ENCODE measurements at regions of chr1 and their contacts with region 1.

Region 1: DNA sequence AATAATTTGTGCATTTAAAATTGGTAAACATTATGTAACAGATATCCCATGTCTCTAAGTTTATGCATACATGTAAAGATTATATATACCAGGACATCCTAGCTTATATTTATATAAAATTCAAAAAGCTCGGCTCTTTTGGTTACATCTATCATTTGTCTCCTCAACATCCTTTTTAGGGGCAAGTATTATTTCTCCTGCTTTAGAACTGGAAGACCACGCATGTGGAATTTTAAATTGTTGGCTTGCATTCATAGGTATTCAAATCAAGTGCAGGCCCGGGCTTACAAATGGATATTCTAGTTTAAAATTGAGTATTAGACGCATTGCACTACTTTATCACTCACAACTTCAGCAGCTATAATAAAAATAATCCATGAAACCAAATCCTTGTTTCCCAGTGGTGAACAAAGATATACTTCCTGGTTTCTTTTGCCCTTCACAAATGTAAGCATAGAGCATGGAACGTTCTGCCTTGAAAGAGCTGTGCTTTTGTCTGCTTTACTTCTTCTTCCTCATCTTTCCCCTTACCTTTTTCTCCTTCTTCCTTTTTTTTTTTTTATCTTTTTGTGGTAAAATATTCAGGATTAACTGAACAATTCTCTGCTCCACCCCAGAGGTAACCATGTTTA is 57.1 kb downstream of the DDAH1 start:
- DNase-seq: no peak
- ATAC-seq: no peak
- H3K4me3 ChIP-seq: no peak overlapping the region
- H3K4me3 Mint-ChIP-seq: no peak overlapping the region
- H3K27ac ChIP-seq: no peak overlapping the region
- H3K27ac Mint-ChIP-seq: no peak overlapping the region
- H3K4me1 ChIP-seq: no peaks in the 10 kb centered on the region
- H3K4me1 Mint-ChIP-seq: no peaks in the 10 kb centered on the region
- H3K27me3 ChIP-seq: no peaks in the 10 kb centered on the region
- H3K27me3 Mint-ChIP-seq: no peaks in the 10 kb centered on the region

Region 2: GRCh38 chr1:85374160-85374559 is 33.7 kb before region 1 on chr1:
- CTCF ChIA-PET with region 1: no interaction called
- POLR2A ChIA-PET with region 1: interaction called, 3 to 10 read pairs
- DNase-seq: no peak
- ATAC-seq: no peak
- H3K4me3 ChIP-seq: no peak overlapping the region
- H3K4me3 Mint-ChIP-seq: no peak overlapping the region
- H3K27ac ChIP-seq: no peak overlapping the region
- H3K27ac Mint-ChIP-seq: no peak overlapping the region
- H3K4me1 ChIP-seq: no peaks in the 10 kb centered on the region
- H3K4me1 Mint-ChIP-seq: no peaks in the 10 kb centered on the region
- H3K27me3 ChIP-seq: no peaks in the 10 kb centered on the region
- H3K27me3 Mint-ChIP-seq: peaks cover 11 to 18% of the 10 kb centered on the region in 2 donors

Measured in T-cell (primary cell).